ENCODE measurements at regions of chr10 and their contacts with region 1.

Region 1: DNA sequence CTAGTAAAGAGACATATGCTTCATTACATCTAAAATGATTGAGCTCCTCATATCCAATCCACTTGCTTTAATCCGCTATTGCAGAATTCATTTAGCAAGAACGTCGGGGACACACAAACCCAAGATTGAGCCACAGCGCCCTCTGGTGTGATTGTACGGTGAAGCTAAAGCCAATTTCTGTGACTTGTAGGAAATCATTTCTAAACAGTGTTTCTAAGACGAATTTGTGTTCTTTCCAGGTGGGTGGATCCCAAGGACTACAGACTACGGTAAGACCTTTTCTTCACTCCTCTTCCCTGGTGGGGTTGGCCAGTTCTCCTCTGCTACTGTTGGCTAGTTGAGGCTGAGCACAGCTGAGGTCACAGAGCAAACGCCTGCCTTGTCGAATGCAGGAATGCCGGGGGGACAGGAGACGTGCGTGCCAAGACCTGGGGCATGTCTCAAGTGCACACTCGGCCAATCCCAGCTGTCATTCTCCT is 5.2 kb downstream of the DMBT1 start:
- DNase-seq: peak; percentile 52
- CTCF ChIP-seq: peak; percentile 76

Region 2: GRCh38 chr10:122267849-122268737 is 297.7 kb before region 1 on chr10:
- CTCF ChIA-PET with region 1: interaction called, 11 read pairs
- POLR2A ChIA-PET with region 1: no interaction called
- DNase-seq: peak; percentile 83
- CTCF ChIP-seq: peak; percentile 91

Region 3: DNA sequence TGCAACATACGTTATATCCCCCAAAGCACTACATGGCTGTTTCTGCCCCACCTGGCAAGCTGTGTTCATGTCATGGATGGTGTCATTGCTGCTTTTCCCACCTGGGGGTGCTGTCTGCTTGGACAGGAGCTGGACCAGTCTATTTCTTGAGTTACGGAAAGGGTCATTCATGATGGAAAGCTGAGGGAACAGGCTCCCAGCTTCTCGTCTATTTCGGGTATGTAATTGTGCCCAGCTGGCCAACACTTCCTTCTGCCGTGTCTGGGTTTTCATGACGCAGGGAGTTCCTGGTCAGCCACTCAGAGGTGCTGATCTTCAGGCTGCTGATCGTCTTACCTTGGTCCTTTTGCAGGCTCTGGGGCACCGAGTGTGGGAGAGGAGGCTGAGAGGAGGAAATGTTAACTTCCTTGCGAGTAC is 286.0 kb before region 1 on chr10:
- CTCF ChIA-PET with region 1: interaction called, 43 read pairs
- POLR2A ChIA-PET with region 1: no interaction called
- DNase-seq: peak; percentile 37
- CTCF ChIP-seq: peak; percentile 67

Region 4: DNA sequence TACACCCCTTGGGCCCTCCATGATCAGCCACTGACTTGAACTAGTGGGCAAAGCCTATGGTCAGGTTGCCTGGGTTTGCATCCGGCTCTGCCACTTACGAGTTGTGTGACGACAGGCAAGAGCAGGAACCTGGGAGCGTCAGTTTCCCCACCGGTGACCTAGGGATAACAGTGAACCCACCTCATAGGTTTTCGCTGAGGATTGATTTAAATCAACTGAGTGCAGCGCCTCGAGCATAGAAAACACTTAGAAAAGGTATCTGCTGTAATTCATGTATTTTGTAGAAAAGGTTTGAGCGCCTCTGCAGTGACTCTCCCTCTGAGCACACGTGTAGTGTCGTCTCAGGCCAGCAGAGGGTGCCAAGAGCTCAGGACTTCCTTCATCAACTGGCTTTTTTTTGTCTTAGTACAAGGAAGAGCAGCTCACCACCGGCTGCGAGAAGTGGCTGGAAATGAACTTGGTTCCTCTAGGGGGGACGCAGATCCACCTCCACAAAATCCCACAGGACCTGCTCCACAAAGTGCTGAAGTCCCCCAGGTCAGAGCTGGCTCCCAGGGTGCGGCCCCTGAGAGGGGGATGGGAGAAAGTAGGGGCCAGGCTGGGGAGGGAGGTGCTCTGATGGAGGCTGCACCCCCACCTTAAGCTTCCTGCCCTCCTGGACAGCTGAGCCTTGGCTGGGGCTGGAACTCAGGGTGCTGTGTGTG is 267.0 kb before region 1 on chr10:
- CTCF ChIA-PET with region 1: interaction called, 34 read pairs
- POLR2A ChIA-PET with region 1: no interaction called
- DNase-seq: peak; percentile 79
- CTCF ChIP-seq: peak; percentile 91

Region 5: GRCh38 chr10:122541541-122542002 is 24.2 kb before region 1 on chr10:
- CTCF ChIA-PET with region 1: interaction called, 11 read pairs
- POLR2A ChIA-PET with region 1: no interaction called
- DNase-seq: no peak
- CTCF ChIP-seq: no peak

Region 6: DNA sequence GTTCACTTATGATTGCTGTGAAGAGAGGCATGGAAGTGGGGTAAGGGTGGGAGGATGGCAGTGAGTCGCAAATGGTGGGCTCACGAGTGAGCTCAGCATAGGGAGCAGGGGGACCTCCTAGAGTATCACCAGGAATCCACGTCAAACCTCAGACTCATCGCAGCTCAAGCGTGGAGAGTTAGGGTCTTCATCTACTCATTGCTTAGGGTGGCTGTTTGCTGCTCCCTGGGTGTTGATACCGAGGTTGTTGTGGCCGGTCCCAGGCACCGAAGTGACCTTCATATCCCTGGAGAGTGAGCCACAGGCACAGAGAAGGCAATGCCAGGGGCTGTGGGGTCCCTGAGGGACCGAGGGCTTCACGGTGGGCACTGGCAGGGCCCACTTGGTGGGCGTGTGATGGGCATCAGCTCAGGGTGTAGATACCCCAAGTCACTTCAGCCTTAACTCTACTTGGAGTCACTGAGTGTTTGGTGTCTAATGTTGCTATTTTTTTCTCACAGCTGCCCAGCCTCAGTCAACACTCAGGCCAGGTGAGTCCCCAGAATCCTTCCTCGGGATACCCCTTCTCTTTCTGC is 11.6 kb after region 1 on chr10:
- CTCF ChIA-PET with region 1: interaction called, 24 read pairs
- POLR2A ChIA-PET with region 1: no interaction called
- DNase-seq: no peak
- CTCF ChIP-seq: no peak

Measured in GM10248 (cell line).